ENCODE measurements at regions of chr5 and their contacts with region 1.

Region 1: GRCh38 chr5:134225618-134226440 is at the start of gene PPP2CA:
- DNase-seq: peak; percentile 93 to 99 (median 95)
- ATAC-seq: peak; percentile 88
- H3K4me3 ChIP-seq: peak within 1 kb of the TSS; percentile 97
- H3K27ac ChIP-seq: peak within 1 kb of the TSS; percentile 99
- H3K4me1 ChIP-seq: peaks cover 20 to 23% of the 10 kb centered on the region in 2 experiments
- H3K27me3 ChIP-seq: no peaks in the 10 kb centered on the region
- CTCF ChIP-seq: no peak
- EP300 ChIP-seq: peak; percentile 40
- POLR2A ChIP-seq: peak; percentile 90
- RAD21 ChIP-seq: no peak; a peak in 1 of 4 replicates
- polyA plus RNA-seq, gene PPP2CA: 23.0 to 24.8 TPM

Region 2: DNA sequence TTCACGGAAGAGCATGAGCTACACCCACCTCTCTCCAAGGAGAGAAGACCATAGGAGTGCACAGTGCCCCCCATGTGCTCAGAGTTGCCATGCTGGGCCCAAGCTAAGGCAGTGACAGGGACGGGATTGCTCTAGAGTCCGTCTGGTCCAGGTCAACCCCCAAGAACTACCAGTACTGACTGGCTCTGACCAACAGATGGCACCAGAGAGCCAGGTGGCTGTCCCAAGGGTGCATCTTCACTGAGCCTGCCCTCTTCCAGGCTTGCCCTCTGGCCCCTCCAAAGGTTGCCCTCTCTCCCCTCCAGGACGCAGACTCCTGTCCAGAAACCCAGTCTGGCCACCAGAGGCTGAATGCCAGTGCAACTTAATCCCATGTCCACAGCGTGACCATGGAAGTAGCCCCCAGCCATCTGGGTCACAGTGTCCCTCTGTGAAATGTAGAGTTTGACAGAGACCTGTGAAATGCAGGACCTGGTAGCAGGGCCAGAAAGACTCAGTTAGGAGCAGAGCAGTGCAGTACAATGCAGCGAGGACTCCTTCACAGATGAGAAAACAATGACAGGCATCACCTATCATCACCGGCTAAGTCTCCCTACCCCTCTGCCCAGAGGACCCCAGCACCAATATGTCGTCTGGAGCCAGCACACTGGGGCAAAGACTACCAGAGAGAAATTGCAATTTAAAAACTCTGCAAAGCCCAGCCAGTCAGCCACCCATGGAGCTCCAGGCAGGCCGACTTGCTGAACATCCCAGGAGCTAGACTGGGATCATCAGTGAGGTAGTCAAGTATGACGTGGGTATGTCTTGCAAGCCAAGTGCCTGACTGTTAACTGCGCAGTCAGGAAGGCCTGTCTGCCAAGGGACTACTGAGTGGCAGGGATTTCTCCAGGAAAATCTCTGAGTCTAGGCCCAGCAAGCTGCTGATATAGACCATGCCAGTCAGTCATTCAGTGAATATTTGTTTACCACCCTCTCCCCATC is 41.4 kb before region 1 on chr5:
- CTCF ChIA-PET with region 1: no interaction called
- POLR2A ChIA-PET with region 1: interaction called, 3 read pairs
- in situ Hi-C with region 1: no loop called
- intact Hi-C with region 1: loop called (anchors 2 kb)
- DNase-seq: peak; percentile 81 to 83 (median 83)
- ATAC-seq: peak; percentile 90
- H3K4me3 ChIP-seq: no peak overlapping the region
- H3K27ac ChIP-seq: no peak overlapping the region
- H3K4me1 ChIP-seq: peaks cover 12 to 19% of the 10 kb centered on the region in 2 experiments; a peak in 4 of 5 replicates
- H3K27me3 ChIP-seq: no peaks in the 10 kb centered on the region
- CTCF ChIP-seq: peak; percentile 89 to 92 (median 90)
- EP300 ChIP-seq: no peak
- POLR2A ChIP-seq: no peak
- RAD21 ChIP-seq: peak; percentile 89 to 98

Region 3: DNA sequence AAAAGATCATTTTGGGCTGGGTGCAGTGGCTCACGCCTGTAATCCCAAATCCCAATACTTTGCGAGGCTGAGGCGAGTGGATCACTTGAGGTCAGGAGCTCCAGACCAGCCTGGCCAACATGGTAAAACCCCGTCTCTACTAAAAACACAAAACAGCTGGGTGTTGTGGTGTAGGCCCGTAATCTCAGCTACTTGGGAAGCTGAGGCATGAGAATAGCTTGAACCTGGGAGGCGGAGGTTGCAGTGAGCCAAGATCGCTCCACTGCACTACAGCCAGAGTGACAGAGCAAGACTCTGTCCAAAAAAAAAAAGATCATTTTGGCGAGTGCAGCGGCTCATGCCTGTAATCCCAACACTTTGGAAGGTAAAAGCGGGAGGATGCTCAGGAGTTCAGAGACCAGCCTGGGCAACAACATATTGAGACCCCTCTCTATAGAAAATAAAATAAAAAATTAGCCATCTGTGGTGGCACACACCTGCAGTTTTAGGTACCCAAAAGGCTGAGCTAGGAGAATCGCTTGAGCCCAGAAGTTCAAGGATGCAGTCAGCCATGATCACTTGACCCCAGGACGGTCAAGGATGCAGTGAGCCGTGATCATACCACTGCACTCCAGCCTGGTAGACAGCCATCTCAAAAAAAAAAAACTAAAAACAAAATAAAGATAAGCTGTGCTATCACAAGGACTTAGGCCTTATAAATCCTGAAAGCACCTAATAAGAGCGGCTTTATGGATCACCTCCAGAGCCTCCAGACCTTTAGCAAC is 16.2 kb before region 1 on chr5:
- CTCF ChIA-PET with region 1: no interaction called
- POLR2A ChIA-PET with region 1: interaction called, 95 read pairs
- in situ Hi-C with region 1: no loop called
- intact Hi-C with region 1: no loop called
- DNase-seq: no peak
- ATAC-seq: no peak
- H3K4me3 ChIP-seq: no peak overlapping the region
- H3K27ac ChIP-seq: no peak overlapping the region
- H3K4me1 ChIP-seq: no peaks in the 10 kb centered on the region; a peak in 1 of 5 replicates
- H3K27me3 ChIP-seq: no peaks in the 10 kb centered on the region
- CTCF ChIP-seq: no peak
- EP300 ChIP-seq: no peak
- POLR2A ChIP-seq: no peak
- RAD21 ChIP-seq: no peak

Region 4: DNA sequence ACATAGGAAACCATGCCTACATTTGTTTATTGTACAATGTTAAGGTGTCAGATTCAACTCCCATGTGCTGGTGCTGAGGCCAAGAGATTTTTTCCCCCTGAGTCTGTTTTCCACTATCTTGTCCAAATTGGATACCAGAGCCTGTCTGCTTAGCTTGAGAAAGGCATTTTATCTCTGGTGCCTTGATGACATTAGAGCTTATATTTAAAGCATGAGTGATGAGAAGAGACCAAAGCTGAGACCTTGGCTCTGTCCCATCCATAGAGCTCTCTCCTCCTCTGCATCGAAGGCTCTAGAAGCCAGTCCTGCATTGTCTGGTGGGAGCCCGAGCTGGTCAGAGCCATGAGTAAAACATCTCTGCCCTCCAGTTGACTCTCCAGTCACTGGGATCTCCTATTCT is 10.5 kb after region 1 on chr5:
- CTCF ChIA-PET with region 1: no interaction called
- POLR2A ChIA-PET with region 1: interaction called, 11 read pairs
- in situ Hi-C with region 1: no loop called
- intact Hi-C with region 1: no loop called
- DNase-seq: no peak
- ATAC-seq: peak; percentile 45; the same call in 2 of the 3 replicates
- H3K4me3 ChIP-seq: no peak overlapping the region
- H3K27ac ChIP-seq: no peak overlapping the region
- H3K4me1 ChIP-seq: no peaks in the 10 kb centered on the region
- H3K27me3 ChIP-seq: no peaks in the 10 kb centered on the region
- CTCF ChIP-seq: no peak
- EP300 ChIP-seq: no peak
- POLR2A ChIP-seq: no peak
- RAD21 ChIP-seq: no peak

Region 5: DNA sequence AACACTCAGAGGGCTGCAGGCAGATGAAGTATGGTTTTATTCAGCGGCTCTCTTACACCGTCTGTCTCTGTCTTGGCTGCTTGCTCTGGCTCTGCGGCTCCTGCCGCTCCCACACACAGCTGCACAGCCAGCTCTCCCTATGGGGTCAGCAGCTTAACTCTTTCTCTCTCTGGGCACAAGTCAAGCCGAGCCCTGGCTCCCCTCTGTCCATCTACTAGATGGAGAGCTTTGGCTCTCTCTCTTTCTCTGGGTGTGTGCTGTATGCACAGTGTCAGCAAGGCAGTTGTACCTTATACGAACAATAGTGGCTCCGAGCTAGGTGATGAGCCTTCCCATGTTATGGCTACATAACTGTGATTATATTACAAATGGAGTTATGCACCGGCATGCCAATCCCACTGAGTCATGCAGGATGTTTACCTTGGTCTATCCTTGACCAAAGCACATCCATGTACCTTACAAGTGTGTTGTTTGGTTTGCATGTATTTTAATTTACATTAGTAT is 19.3 kb after region 1 on chr5:
- CTCF ChIA-PET with region 1: no interaction called
- POLR2A ChIA-PET with region 1: interaction called, 18 read pairs
- in situ Hi-C with region 1: no loop called
- intact Hi-C with region 1: loop called (anchors 2 kb)
- DNase-seq: peak in 1 of 4 experiments; percentile 24
- ATAC-seq: peak; percentile 9; the same call in 2 of the 3 replicates
- H3K4me3 ChIP-seq: no peak overlapping the region
- H3K27ac ChIP-seq: no peak overlapping the region
- H3K4me1 ChIP-seq: peaks cover 5 to 10% of the 10 kb centered on the region in 2 experiments; a peak in 4 of 5 replicates
- H3K27me3 ChIP-seq: no peaks in the 10 kb centered on the region
- CTCF ChIP-seq: no peak
- EP300 ChIP-seq: no peak
- POLR2A ChIP-seq: no peak
- RAD21 ChIP-seq: no peak

Region 6: GRCh38 chr5:134289509-134290113 is 63.8 kb after region 1 on chr5:
- CTCF ChIA-PET with region 1: interaction called, 5 read pairs
- POLR2A ChIA-PET with region 1: no interaction called
- in situ Hi-C with region 1: no loop called
- intact Hi-C with region 1: loop called (anchors 2 kb)
- DNase-seq: peak; percentile 52 to 85 (median 63)
- ATAC-seq: peak; percentile 99
- H3K4me3 ChIP-seq: no peak overlapping the region
- H3K27ac ChIP-seq: no peak overlapping the region
- H3K4me1 ChIP-seq: no peaks in the 10 kb centered on the region
- H3K27me3 ChIP-seq: no peaks in the 10 kb centered on the region; a peak in 1 of 5 replicates
- CTCF ChIP-seq: peak; percentile 75 to 93 (median 81)
- EP300 ChIP-seq: no peak
- POLR2A ChIP-seq: no peak
- RAD21 ChIP-seq: peak; percentile 99